H1 (cell line): ENCODE measurements at regions of chr2 and their contacts with region 1.

Region 1: GRCh38 chr2:79855264-79856006 is 342.6 kb downstream of the CTNNA2 start:
- DNase-seq: peak; percentile 33 to 59
- H3K4me3 ChIP-seq: no peak overlapping the region
- H3K27ac ChIP-seq: no peak overlapping the region
- H3K4me1 ChIP-seq: peaks cover 0 to 8% (median 2%) of the 10 kb centered on the region in 4 experiments; a peak in 3 of 7 replicates
- H3K27me3 ChIP-seq: no peaks in the 10 kb centered on the region
- CTCF ChIP-seq: peak; percentile 67 to 87 (median 75)
- EP300 ChIP-seq: no peak
- POLR2A ChIP-seq: no peak
- RAD21 ChIP-seq: peak; percentile 92 to 93

Region 2: GRCh38 chr2:79530443-79530842 is 325.0 kb before region 1 on chr2:
- CTCF ChIA-PET with region 1: interaction called, 10 read pairs
- POLR2A ChIA-PET with region 1: no interaction called
- DNase-seq: no peak
- H3K4me3 ChIP-seq: no peak overlapping the region
- H3K27ac ChIP-seq: no peak overlapping the region
- H3K4me1 ChIP-seq: no peaks in the 10 kb centered on the region
- H3K27me3 ChIP-seq: no peaks in the 10 kb centered on the region
- CTCF ChIP-seq: peak in 2 of 3 experiments; percentile 36 to 48; a peak in 2 of 4 replicates
- EP300 ChIP-seq: no peak
- POLR2A ChIP-seq: no peak
- RAD21 ChIP-seq: peak in 1 of 2 experiments; percentile 58; a peak in 2 of 4 replicates

Region 3: GRCh38 chr2:79670198-79670597 is 185.2 kb before region 1 on chr2:
- CTCF ChIA-PET with region 1: interaction called, 43 read pairs
- POLR2A ChIA-PET with region 1: no interaction called
- DNase-seq: peak; percentile 79 to 84
- H3K4me3 ChIP-seq: no peak overlapping the region
- H3K27ac ChIP-seq: no peak overlapping the region
- H3K4me1 ChIP-seq: peaks cover 0 to 4% (median 0%) of the 10 kb centered on the region in 4 experiments; a peak in 3 of 7 replicates
- H3K27me3 ChIP-seq: no peaks in the 10 kb centered on the region
- CTCF ChIP-seq: peak; percentile 46 to 64 (median 61)
- EP300 ChIP-seq: no peak
- POLR2A ChIP-seq: no peak
- RAD21 ChIP-seq: peak; percentile 69 to 77

Region 4: DNA sequence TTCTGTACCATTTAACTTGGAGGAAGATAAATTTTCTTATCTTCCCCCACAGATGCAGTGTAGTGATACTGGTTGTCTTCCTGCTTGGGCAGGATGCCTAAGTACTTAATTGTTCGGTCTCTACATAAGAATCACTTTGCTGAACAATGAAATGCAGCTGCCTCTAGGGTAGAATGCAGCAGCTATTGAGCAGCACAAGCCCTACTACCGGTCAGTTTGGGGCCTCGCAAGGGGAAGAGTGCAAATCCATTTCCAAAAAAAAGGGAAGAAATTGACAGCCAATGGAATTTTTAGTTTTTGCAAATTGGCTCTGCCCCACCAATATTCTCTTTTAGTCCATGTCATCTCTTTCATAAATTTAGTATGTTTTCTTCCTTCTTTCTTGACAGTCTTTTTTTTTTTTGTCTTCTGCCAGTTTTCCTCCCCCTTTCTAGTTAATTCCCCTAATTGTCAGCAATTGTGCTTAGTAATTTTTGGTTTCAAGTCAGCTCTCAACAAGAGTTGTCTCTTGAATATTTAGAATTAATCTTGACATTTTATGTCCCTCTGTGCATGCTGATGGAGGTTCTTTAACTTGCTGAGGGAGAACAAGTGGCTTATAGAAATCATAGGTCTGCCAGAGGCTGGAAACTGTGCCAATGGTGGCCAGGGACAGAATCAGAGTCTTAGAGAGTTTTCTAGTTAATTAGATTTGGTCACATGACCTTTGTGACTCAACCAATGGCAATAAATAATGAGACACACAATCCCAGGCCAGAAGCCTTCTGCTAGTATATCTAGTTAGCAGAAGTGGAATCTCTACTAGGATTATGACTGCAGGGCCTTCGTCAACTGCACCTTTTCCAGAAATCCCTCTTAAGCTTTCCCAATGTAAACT is 72.6 kb before region 1 on chr2:
- CTCF ChIA-PET with region 1: interaction called, 15 read pairs
- POLR2A ChIA-PET with region 1: no interaction called
- DNase-seq: peak; percentile 48 to 77
- H3K4me3 ChIP-seq: peak overlapping the region in 1 of 4 experiments; percentile 27; a peak in 1 of 8 replicates
- H3K27ac ChIP-seq: peak overlapping the region; percentile 61; the same call in 1 of the 2 replicates
- H3K4me1 ChIP-seq: peaks cover 0 to 10% (median 4%) of the 10 kb centered on the region in 4 experiments; a peak in 5 of 7 replicates
- H3K27me3 ChIP-seq: no peaks in the 10 kb centered on the region
- CTCF ChIP-seq: peak in 2 of 3 experiments; percentile 19 to 33; a peak in 1 of 4 replicates
- EP300 ChIP-seq: peak in 1 of 2 experiments; percentile 88; a peak in 1 of 3 replicates
- POLR2A ChIP-seq: 0 out of 3 replicates have a peak, but pooled peaks of 1 of the 2 experiments have one; percentile 26
- RAD21 ChIP-seq: peak in 1 of 2 experiments; percentile 29; a peak in 2 of 4 replicates

Region 5: DNA sequence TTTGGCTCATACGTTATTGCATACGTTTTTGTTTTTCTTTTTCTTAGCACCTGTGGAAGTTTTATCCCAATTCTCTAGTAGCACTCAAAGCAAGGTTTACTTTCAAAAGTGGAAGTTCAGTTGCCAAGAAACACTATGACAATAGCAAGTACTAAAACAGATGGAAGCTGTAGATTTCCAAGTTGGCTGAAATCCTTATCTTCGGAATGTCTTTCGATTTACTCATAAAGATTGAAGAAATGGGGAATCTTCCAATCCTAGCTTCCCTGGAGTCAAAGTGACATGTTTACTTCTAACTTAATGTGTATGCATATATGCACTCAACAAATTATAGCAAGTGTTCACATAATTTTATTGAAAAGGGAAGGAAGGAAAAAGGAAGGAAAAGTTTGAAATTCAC is 35.2 kb before region 1 on chr2:
- CTCF ChIA-PET with region 1: no interaction called
- POLR2A ChIA-PET with region 1: no interaction called
- DNase-seq: no peak
- H3K4me3 ChIP-seq: no peak overlapping the region
- H3K27ac ChIP-seq: no peak overlapping the region
- H3K4me1 ChIP-seq: no peaks in the 10 kb centered on the region
- H3K27me3 ChIP-seq: no peaks in the 10 kb centered on the region
- CTCF ChIP-seq: no peak
- EP300 ChIP-seq: no peak
- POLR2A ChIP-seq: no peak
- RAD21 ChIP-seq: no peak

Region 6: DNA sequence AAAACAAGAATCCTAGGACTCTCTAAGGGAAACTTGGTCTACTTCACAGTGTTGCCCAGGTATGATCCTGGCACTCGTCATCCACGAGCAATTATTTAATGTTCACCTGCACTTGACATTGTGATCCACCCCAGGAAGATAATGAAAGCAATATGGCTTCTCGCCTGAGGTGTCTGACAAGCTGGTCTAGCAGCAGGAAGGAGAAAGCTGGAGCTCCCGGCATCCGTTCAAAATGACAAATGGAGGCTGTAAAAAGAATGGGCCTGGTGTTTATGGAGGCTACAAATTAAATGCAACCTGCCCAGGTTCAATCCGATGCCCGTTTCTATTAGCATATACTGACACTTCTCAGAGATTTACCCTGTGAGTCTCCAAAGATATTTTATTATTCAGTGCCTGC is 24.9 kb before region 1 on chr2:
- CTCF ChIA-PET with region 1: no interaction called
- POLR2A ChIA-PET with region 1: no interaction called
- DNase-seq: no peak
- H3K4me3 ChIP-seq: no peak overlapping the region
- H3K27ac ChIP-seq: no peak overlapping the region
- H3K4me1 ChIP-seq: peaks cover 0 to 21% (median 7%) of the 10 kb centered on the region in 4 experiments; a peak in 4 of 7 replicates
- H3K27me3 ChIP-seq: no peaks in the 10 kb centered on the region
- CTCF ChIP-seq: no peak
- EP300 ChIP-seq: no peak
- POLR2A ChIP-seq: no peak
- RAD21 ChIP-seq: no peak

Region 7: DNA sequence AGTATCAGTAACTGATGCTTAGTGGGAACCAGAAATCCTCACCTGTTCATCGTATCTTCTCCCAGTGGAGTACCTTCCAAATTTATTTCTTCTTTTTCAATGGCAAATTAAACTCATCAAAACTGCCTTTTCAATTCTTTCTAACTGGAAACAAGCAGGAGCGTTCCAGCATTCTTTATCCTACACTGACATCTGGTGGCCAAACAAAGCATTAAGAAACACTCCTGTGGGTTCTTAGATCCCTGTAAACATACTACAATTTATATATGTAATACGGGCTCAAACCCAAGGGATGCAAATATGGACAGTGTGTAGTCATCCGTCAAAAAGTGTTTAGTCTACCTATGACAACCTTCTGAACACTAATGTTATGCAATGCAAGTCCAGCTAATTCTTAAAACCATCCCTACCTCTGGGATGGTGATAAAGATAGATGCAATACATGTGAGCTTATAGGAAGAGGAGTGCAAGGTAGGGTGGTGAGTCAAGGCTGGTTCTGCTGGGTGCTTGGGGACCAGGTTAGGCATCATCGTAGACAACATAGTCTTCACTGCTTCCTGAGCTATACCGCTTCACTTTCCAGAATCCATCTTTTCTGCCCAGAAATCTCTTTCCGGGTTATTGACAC is 32.4 kb after region 1 on chr2:
- CTCF ChIA-PET with region 1: interaction called, 17 read pairs
- POLR2A ChIA-PET with region 1: no interaction called
- DNase-seq: no peak
- H3K4me3 ChIP-seq: no peak overlapping the region
- H3K27ac ChIP-seq: no peak overlapping the region
- H3K4me1 ChIP-seq: peaks cover 0 to 11% (median 8%) of the 10 kb centered on the region in 4 experiments; a peak in 4 of 7 replicates
- H3K27me3 ChIP-seq: no peaks in the 10 kb centered on the region
- CTCF ChIP-seq: peak in 2 of 3 experiments; percentile 55 to 67; a peak in 2 of 4 replicates
- EP300 ChIP-seq: no peak
- POLR2A ChIP-seq: no peak
- RAD21 ChIP-seq: peak; percentile 94 to 95

Region 8: DNA sequence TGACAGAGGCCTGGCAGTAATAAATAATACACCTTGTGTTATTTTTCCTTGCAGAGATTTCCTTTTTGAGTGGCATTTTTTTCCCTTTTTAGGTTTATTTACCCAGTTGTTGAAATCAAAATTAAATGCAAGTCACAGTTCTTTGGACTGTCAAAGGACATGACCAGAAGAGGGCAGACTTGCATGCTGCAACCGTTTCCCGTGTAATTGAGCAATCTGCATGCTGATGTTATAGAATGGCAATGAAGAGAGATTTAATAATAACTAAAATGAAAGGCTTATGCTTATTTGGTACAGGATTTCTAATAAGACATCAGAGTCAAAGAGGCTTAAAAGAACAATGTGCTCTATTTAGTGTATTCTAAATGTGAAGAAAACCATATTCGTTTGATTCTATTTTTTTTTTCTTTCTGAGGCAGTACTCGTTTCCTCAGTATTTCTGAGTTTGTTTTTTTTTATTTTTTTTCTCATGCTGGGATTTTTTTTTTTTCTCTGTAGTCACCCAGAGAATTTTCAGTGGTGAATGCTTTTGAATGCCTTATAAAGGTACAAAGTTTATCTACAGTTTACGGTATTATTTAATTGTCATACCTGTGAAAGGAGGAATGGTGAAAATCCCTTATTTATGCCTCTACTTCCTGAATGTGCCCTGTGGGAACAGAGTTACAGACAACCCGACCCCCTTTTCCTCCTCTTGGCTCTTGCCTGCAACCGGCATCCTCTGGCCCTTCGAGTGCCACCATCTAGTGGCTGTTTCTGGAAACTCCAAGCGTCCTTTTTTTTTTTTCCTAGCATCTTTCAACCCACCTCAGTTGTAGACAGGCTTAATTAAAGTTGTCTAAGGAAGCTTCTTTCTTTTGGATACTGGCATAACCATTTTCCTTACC is 80.6 kb after region 1 on chr2:
- CTCF ChIA-PET with region 1: no interaction called
- POLR2A ChIA-PET with region 1: no interaction called
- DNase-seq: peak in 1 of 2 experiments; percentile 29
- H3K4me3 ChIP-seq: peak overlapping the region in 1 of 4 experiments; percentile 44; a peak in 4 of 8 replicates
- H3K27ac ChIP-seq: no peak overlapping the region
- H3K4me1 ChIP-seq: no peaks in the 10 kb centered on the region
- H3K27me3 ChIP-seq: no peaks in the 10 kb centered on the region
- CTCF ChIP-seq: peak; percentile 62 to 74 (median 72)
- EP300 ChIP-seq: no peak
- POLR2A ChIP-seq: no peak
- RAD21 ChIP-seq: peak; percentile 72 to 76

Region 9: DNA sequence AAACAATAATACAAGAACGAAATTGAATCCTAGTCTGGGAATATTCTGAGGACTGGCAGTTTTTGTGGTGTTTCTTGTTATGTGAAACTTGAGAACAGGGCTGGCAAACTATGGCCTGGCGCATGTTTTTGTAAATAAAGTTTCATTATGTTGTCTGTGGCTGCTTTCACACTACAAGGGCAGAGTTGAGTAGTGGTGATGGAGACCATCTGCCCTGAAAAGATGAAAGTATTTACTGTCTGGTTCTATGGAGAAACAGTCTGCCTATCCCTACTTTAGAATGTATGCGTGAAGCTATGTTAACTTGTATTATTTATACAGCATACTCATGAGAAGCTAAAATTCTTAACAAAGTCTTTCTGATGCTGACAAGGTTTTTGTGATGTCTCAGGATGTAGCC is 97.2 kb after region 1 on chr2:
- CTCF ChIA-PET with region 1: no interaction called
- POLR2A ChIA-PET with region 1: no interaction called
- DNase-seq: no peak
- H3K4me3 ChIP-seq: no peak overlapping the region
- H3K27ac ChIP-seq: no peak overlapping the region
- H3K4me1 ChIP-seq: 0 out of 7 replicates have a peak, but pooled peaks cover 0 to 2% (median 0%) of the 10 kb centered on the region in 4 experiments
- H3K27me3 ChIP-seq: no peaks in the 10 kb centered on the region
- CTCF ChIP-seq: no peak
- EP300 ChIP-seq: no peak
- POLR2A ChIP-seq: no peak
- RAD21 ChIP-seq: no peak